Activated naive CD4-positive, alpha-beta T cell treated with anti-CD3 and anti-CD28 coated beads for 36 hours (primary cell): ENCODE measurements at regions of chr5 and their contacts with region 1.

Region 1: GRCh38 chr5:36875790-36876388 is 680 bp upstream of the NIPBL start:
- DNase-seq: peak; percentile 77
- H3K4me3 Mint-ChIP-seq: peak overlapping the region; percentile 83
- H3K27ac Mint-ChIP-seq: peak overlapping the region; percentile 96
- H3K4me1 Mint-ChIP-seq: peaks cover 25% of the 10 kb centered on the region
- H3K27me3 Mint-ChIP-seq: no peaks in the 10 kb centered on the region

Region 2: DNA sequence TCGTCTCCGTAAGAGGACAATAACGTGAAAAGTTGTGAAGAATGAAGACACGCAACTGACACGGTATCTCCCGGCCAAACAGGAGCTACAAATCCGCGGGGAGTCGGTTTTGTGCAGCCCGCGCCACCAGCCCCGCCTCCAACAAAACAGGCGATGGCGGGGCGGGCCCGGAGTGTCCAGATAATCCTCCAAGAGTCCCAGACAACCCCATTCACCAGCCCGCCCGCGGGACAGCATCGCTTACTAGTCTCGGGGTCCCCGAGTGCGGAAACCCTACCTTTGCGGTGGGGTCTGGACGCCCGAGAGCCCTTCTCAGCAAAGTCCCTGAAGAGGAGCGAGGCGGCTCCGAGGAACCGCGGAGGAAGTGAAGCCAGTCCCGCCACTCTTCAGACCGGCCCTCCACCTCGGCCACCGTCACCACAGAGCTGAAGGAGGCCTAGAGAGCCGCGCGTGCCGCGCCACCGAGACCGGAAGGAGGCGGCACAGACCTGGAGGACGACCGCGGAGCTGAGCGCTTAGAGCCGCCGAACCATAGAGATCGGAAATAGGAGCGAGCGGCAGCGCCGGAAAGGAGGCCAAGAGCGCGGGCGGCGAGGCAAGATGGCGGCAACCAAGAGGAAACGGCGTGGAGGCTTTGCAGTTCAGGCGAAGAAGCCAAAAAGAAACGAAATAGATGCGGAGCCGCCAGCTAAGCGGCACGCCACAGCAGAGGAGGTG is 1960.6 kb before region 1 on chr5 and contains the starts of genes BRIX1 and RAD1:
- CTCF ChIA-PET with region 1: no interaction called
- intact Hi-C with region 1: loop called (anchors 5 kb)
- DNase-seq: peak; percentile 97
- H3K4me3 Mint-ChIP-seq: no peak within 1 kb of the TSS
- H3K27ac Mint-ChIP-seq: peak within 1 kb of the TSS; percentile 52
- H3K4me1 Mint-ChIP-seq: peaks cover 32% of the 10 kb centered on the region
- H3K27me3 Mint-ChIP-seq: no peaks in the 10 kb centered on the region
- total RNA-seq, gene BRIX1: 66.5 to 69.0 TPM
- total RNA-seq, gene RAD1: 38.8 to 40.7 TPM

Region 3: GRCh38 chr5:36606428-36607113 is 269.3 kb before region 1 on chr5 and contains the start of gene SLC1A3:
- CTCF ChIA-PET with region 1: no interaction called
- intact Hi-C with region 1: loop called (anchors 2 kb)
- DNase-seq: peak; percentile 80
- H3K4me3 Mint-ChIP-seq: peak within 1 kb of the TSS; percentile 71
- H3K27ac Mint-ChIP-seq: peak within 1 kb of the TSS; percentile 67
- H3K4me1 Mint-ChIP-seq: peaks cover 19% of the 10 kb centered on the region
- H3K27me3 Mint-ChIP-seq: peaks cover 47% of the 10 kb centered on the region
- total RNA-seq, gene SLC1A3: 0.86 to 0.99 TPM

Region 4: DNA sequence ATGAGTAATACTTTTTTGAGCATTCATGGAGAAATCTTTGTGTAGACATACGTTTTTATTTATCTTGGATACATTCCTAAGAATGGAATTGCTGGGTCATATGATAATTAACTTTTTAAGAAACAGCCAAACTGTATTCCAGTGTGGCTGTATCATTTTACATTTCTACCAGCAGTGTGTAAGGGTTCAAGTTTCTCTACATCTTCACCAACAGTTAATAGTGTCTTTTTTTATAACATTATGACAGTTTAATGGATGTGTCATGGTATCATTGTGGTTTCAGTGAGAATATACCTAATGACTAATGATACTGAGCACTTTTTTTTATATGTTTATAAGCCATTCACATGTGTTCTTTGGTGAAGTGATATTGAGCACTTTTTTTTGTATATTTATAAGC is 53.1 kb after region 1 on chr5:
- CTCF ChIA-PET with region 1: no interaction called
- intact Hi-C with region 1: loop called (anchors 5 kb)
- DNase-seq: no peak
- H3K4me3 Mint-ChIP-seq: no peak overlapping the region
- H3K27ac Mint-ChIP-seq: no peak overlapping the region
- H3K4me1 Mint-ChIP-seq: peaks cover 55% of the 10 kb centered on the region
- H3K27me3 Mint-ChIP-seq: no peaks in the 10 kb centered on the region

Region 5: DNA sequence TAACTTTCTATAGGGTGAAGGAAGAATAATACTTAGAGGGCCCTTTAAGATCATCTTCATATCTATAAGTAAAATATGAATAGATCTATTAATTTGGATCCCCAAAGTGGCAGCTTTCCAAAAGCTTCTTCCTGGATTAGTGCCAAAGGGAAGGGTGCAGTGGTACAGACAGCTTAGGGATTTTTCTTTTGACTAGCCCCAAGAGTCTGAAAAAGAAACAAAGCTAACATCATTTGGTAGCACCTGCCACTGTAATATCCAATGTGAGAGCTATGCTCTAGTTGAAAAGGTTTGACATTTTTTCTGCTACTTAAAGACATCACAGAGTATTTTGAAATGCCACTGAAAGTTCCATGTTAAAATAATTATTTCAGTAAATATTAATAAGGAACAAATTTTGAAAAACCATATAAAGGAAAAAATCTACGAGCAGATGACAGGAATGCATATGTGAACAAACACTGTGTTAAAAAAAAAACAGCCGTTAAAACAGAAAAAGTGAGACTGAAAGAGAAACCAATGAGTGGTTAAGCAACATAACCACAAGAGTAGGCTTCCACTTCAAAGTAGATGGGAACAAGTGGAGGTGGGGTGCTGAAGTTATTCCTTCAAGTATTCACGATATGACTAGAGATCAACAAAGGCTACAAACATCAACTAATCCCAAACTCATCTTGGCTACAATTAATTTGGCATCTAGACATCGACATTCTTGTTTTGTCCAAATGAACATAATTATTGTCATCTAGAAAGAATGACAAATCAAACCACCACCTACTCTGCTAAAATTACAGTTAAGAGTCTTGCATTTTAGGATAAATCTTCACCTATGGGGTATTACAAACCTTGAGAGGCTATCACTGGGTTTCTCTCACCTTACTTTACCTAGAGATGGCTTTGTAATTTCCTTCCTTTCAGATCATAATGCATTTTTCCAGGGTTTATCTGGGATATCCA is 235.8 kb after region 1 on chr5:
- CTCF ChIA-PET with region 1: no interaction called
- intact Hi-C with region 1: loop called (anchors 2 kb)
- DNase-seq: peak; percentile 25
- H3K4me3 Mint-ChIP-seq: peak overlapping the region; percentile 8
- H3K27ac Mint-ChIP-seq: peak overlapping the region; percentile 37
- H3K4me1 Mint-ChIP-seq: peaks cover 37% of the 10 kb centered on the region
- H3K27me3 Mint-ChIP-seq: peaks cover 13% of the 10 kb centered on the region

Region 6: DNA sequence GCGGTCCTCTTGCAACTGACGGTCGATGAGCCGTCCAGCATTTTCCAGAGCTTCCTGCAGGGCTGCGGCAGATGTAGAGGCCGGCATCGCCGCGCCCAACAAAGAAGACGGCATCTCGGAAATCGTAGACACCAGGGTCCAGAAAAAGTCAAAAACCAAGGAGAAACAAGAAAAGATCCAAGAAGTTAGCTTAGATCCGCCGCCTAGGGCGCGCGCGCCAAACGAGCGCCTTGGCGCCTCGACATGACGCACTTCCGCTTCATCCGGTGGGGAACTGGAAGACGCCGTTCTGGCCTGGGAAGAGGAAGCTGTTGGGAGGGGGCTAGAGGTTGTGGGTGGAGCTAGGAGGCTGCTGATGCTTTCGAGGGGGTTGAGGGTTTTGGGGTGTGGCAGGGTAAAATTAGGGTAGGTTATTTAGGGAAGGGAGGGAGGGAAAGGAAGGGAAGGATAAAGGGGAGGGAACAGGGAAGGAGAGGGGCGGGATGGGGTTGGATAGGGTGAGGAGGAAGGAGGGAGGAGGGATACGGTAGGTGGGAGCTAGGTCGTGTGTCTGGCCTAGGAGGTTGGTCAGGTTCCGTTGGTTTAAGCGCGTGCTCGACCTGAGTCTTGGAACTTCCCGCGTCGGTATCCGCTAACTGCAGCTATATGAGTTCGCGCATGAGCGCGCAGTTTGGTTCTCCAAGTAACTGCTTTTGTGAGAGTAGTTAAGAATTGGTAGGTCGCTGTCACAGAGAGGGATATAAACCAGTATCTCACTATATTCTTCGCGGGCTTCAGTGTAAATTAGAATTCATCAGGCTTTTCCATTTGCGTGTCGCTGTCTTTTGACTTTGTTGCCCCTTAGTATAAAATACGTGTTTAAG is 495.2 kb after region 1 on chr5 and contains the start of gene NUP155:
- CTCF ChIA-PET with region 1: no interaction called
- intact Hi-C with region 1: loop called (anchors 1 kb)
- DNase-seq: peak; percentile 94
- H3K4me3 Mint-ChIP-seq: peak within 1 kb of the TSS; percentile 99
- H3K27ac Mint-ChIP-seq: peak within 1 kb of the TSS; percentile 96
- H3K4me1 Mint-ChIP-seq: peaks cover 37% of the 10 kb centered on the region
- H3K27me3 Mint-ChIP-seq: no peaks in the 10 kb centered on the region
- total RNA-seq, gene NUP155: 79.2 to 87.8 TPM